GM18951 (cell line): ENCODE measurements at regions of chr11 and their contacts with region 1.

Region 1: DNA sequence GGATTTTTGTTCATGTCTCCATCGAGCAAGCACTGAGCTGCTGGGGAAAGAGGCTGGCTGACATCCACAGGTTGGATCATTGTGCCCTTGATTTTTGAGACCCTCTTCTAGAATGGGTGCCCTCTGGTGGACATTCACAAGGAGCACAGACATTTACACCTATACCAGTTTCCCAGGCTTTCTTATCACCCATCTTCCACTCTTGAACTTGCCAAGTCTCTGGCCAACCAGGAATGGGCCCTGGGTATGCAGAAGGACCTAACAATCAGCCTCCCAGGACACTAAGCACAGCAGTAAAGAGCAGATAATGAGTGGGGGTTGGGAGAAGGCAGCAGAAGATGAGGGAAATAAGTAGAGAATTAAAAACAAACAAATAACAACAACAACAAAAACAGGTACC is 5.7 kb upstream of the INTS4 start:
- POLR2A ChIP-seq: no peak

Region 2: GRCh38 chr11:77776455-77776854 is 223.7 kb before region 1 on chr11:
- in situ Hi-C with region 1: loop called (anchors 10 kb)
- POLR2A ChIP-seq: no peak